Common myeloid progenitor, CD34-positive (primary cell): ENCODE measurements at regions of chr4 and their contacts with region 1.

Region 1: DNA sequence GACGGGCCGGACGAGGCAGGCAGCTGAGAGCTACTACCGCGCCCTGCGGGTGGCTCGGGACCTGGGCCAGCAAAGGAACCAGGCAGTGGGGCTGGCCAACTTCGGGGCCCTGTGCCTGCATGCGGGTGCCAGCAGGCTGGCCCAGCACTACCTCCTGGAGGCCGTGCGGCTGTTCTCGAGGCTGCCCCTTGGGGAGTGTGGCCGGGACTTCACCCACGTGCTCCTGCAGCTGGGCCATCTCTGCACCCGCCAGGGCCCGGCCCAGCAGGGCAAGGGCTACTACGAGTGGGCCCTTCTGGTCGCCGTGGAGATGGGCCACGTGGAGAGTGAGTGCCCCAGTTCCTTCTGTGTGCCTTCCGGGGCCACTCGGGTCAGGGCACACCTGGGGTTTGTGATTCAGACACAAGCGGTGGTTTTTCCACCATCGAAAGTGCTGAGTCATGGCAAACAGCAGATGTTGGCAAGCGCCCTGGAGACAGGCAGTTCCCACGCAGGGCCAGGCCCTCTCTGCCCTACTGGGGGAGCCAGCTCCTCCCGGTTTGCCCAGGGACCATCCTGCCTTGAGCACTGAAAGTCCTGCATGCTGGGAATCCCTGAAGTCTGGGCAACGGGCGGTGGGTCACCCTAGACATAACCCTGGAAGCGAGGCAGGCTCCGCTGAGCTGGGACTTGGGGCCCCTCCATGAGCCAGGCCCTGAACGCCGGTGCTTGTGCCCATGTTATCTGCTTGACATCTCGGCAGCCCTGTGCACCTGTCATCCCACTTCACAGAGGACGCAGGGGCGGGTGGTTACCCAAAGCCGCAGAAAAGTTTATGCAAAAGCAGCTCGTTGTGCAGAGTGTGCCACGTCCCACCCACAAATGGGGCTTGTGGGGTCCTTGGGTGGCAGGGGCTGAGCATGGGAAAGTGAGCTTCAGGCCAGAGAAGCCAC is 29.5 kb downstream of the SH3TC1 start:
- DNase-seq: peak; percentile 78 to 97 (median 96)
- H3K4me3 ChIP-seq: peak overlapping the region in 1 of 7 experiments; percentile 28
- H3K27ac ChIP-seq: no peak overlapping the region
- H3K4me1 ChIP-seq: peaks cover 8 to 62% (median 57%) of the 10 kb centered on the region in 4 experiments
- H3K27me3 ChIP-seq: no peaks in the 10 kb centered on the region

Region 2: GRCh38 chr4:8198906-8199593 is 29.5 kb before region 1 on chr4 and contains the start of gene SH3TC1:
- CTCF ChIA-PET with region 1: interaction called, 32 read pairs
- POLR2A ChIA-PET with region 1: interaction called, 4 read pairs
- DNase-seq: peak; percentile 83 to 95 (median 93)
- H3K4me3 ChIP-seq: peak within 1 kb of the TSS; percentile 42 to 88 (median 80)
- H3K27ac ChIP-seq: peak within 1 kb of the TSS; percentile 46 to 81
- H3K4me1 ChIP-seq: peaks cover 4 to 89% (median 73%) of the 10 kb centered on the region in 4 experiments
- H3K27me3 ChIP-seq: no peaks in the 10 kb centered on the region

Region 3: GRCh38 chr4:8205749-8206611 is 22.6 kb before region 1 on chr4:
- CTCF ChIA-PET with region 1: interaction called, 29 read pairs
- POLR2A ChIA-PET with region 1: interaction called, 3 read pairs
- DNase-seq: peak; percentile 73 to 95 (median 93)
- H3K4me3 ChIP-seq: peak overlapping the region in 4 of 7 experiments; percentile 11 to 26 (median 25)
- H3K27ac ChIP-seq: no peak overlapping the region
- H3K4me1 ChIP-seq: peaks cover 4 to 95% (median 85%) of the 10 kb centered on the region in 4 experiments
- H3K27me3 ChIP-seq: no peaks in the 10 kb centered on the region

Region 4: DNA sequence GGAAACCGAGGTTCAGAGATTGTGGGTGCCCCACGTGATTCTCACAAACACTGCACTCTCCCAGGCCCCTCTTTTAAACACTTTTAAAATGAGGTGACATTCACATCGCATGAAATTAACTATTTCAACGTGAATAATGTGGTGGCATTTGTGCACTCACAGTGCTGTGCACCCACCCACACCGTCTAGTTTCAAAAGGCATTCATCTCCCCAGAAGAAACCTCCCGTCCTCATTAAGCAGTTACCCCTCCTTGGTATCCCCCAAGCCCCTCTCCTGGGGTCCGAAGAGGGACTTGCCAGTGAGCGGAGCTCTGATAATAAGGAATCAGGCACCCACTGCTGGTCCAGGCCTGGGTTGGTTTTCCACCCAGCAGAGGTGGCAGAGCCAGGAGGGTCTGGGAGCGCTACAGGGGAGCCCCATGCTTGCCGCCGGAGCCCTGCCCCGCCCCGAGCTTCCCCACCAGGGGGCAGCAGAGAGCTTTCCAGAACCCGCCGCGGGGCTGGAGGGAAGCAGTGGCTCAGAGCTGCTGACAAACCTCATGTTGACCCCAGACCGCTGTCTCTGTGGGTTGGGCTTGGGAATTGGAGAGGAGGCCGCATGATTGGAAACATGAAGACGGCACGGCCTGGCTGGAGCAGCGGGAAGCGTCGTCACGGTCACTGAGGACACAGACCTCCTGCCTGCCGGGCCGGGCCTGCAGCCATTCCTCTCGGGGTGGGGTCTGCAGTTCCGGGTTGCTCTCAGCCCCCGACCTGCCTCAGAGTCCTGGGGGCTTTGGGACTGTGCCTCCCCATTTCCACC is 13.5 kb after region 1 on chr4:
- CTCF ChIA-PET with region 1: interaction called, 12 read pairs
- POLR2A ChIA-PET with region 1: no interaction called
- DNase-seq: peak; percentile 64 to 83 (median 78)
- H3K4me3 ChIP-seq: no peak overlapping the region
- H3K27ac ChIP-seq: no peak overlapping the region
- H3K4me1 ChIP-seq: peaks cover 0 to 33% (median 20%) of the 10 kb centered on the region in 4 experiments
- H3K27me3 ChIP-seq: no peaks in the 10 kb centered on the region